Gastrocnemius medialis (tissue), 4 donors: ENCODE measurements at regions of chr4 and their contacts with region 1.

Region 1: DNA sequence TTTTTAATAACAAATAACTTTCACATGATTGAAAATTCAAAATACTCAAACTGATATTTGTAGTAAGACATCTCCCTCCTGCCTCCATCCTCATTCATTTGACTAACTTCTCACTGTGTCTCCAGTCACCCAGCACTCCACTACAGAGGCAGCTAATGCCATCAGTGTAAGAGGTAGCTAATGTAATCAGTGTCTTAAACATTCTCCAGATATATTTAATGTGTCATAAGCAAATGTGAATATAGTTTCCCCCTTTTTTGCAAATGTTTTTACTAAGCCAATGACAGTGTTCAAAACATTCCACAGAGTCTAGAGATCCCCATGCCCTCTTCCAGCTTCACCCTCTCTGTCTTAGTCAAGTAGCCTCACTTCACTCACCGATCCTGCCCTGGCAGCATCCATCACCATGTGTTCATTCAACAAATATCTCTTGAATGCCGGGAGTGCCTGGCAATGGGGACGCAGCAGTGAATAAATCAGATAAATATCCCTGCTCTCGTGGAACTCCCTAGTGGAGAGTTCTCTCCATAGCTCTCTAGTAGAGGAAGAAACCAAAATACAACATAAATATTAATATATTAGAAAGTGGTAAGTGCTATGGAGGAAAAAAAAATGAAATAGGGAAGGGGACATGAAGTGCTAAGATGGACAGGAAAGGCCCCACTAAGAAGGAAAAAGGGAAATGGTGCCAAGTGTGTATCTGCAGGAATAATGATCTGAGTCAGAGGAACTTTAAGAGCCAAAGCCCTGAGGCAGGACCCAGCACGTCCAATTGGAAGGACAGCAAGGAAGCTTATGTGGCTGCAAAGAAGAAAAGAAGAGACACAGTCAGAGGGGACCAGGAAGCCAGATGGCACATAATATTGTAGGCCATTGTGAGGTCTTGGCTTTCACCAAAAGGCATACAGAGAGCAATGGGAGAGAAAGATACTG is 18.7 kb downstream of the SCFD2 start:
- DNase-seq: no peak
- ATAC-seq: no peak
- H3K4me3 ChIP-seq: no peak overlapping the region
- H3K27ac ChIP-seq: no peak overlapping the region
- H3K4me1 ChIP-seq: peaks cover 7 to 9% of the 10 kb centered on the region in 2 donors
- H3K27me3 ChIP-seq: no peaks in the 10 kb centered on the region
- CTCF ChIP-seq: no peak
- POLR2A ChIP-seq: no peak

Region 2: GRCh38 chr4:53174823-53175222 is 172.4 kb before region 1 on chr4:
- in situ Hi-C with region 1: no loop called
- intact Hi-C with region 1: no loop called
- DNase-seq: no peak
- ATAC-seq: no peak
- H3K4me3 ChIP-seq: no peak overlapping the region
- H3K27ac ChIP-seq: no peak overlapping the region
- H3K4me1 ChIP-seq: no peaks in the 10 kb centered on the region
- H3K27me3 ChIP-seq: no peaks in the 10 kb centered on the region
- CTCF ChIP-seq: no peak
- POLR2A ChIP-seq: no peak

Region 3: GRCh38 chr4:53189011-53189410 is 158.2 kb before region 1 on chr4:
- in situ Hi-C with region 1: no loop called
- intact Hi-C with region 1: no loop called
- DNase-seq: no peak
- ATAC-seq: no peak
- H3K4me3 ChIP-seq: no peak overlapping the region
- H3K27ac ChIP-seq: no peak overlapping the region
- H3K4me1 ChIP-seq: no peaks in the 10 kb centered on the region
- H3K27me3 ChIP-seq: no peaks in the 10 kb centered on the region
- CTCF ChIP-seq: no peak
- POLR2A ChIP-seq: no peak

Region 4: DNA sequence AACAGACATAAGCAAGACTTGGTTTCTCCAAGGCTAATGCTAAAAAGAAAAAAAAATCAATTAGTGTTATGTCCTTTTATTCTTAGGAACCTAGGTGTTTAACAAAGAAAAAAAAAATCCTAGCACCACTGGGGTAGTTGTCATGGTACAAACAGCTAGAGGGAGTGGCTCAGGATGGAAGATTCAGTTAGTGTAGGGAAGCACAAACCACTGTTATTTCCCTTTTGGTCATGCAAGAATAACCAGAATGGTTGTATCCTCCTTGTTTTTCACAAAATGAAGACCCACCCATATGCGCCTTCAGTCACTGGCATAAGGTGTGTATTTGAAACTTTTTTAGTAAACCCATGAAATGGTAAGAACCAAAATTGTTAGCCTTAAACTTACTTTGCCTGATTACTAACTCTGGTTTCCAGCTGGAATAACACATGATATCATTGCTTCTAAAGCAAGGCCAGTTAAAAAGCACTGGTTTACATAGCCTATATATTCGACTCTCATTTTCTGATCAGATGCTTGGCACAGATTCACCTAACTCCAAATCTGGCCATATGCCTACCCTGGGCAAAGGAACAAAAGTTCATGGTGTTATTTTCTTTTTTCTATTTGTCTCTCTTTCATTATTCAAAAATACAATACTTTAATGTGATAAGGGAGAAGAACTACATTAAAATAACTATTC is 113.9 kb before region 1 on chr4:
- in situ Hi-C with region 1: loop called in 1 of 4 experiments (anchors 25 kb)
- intact Hi-C with region 1: no loop called
- DNase-seq: no peak
- ATAC-seq: no peak
- H3K4me3 ChIP-seq: no peak overlapping the region
- H3K27ac ChIP-seq: no peak overlapping the region
- H3K4me1 ChIP-seq: no peaks in the 10 kb centered on the region
- H3K27me3 ChIP-seq: no peaks in the 10 kb centered on the region
- CTCF ChIP-seq: no peak
- POLR2A ChIP-seq: no peak

Region 5: GRCh38 chr4:53614591-53614990 is 267.4 kb after region 1 on chr4:
- in situ Hi-C with region 1: no loop called
- intact Hi-C with region 1: no loop called
- DNase-seq: no peak
- ATAC-seq: no peak
- H3K4me3 ChIP-seq: no peak overlapping the region
- H3K27ac ChIP-seq: no peak overlapping the region
- H3K4me1 ChIP-seq: peaks cover 0 to 4% of the 10 kb centered on the region in 2 donors
- H3K27me3 ChIP-seq: no peaks in the 10 kb centered on the region
- CTCF ChIP-seq: no peak
- POLR2A ChIP-seq: no peak